ENCODE measurements at regions of chr1 and their contacts with region 1.

Region 1: DNA sequence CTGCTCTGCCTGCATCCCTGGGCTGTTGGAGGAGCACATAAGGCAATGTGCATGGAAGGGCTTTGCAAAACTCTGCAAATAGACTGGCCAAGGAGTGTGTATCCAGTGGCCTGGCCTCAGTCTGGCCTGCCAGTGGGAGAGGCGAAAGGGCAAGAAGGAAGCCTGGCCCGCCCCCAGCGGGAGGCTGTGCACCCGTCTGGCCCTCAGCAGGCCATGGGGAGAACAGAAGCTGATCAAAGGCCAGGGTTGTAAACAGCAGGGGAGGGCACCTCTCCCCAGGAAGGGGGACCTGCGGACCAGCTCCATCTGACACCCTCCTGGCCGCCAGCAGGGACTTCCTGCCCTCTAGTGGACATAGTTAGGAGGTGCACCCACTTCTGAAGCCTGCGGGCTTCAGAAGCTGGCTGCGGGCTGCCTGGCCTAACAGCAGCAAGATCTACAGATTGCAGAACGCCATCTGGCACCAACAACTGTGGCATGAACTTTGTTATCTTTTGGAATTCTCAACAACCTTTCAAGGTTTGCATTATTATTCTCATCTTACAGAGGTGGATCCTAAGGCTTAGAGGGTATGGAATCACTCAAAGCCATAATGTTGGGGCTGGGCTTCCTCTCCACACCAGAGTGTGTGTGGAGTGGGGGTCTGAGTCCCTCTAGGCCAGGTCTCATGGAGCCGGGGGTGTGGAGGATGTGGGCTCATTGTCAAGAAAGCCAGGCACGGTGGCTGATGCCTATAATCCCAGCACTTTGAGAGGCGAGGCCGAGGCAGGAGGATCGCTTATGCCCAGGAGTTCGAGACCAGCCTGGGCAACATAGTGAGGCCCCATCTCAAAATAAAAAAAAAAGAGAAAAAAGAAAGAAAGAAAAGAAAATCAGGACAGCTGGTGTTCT is 18.9 kb upstream of the CDK18 start:
- DNase-seq: peak; percentile 92
- H3K4me3 ChIP-seq: peak overlapping the region in 1 of 2 experiments; percentile 22; a peak in 1 of 4 replicates
- H3K27ac ChIP-seq: no peak overlapping the region
- H3K4me1 ChIP-seq: peaks cover 0 to 3% of the 10 kb centered on the region in 2 experiments; a peak in 2 of 4 replicates
- H3K27me3 ChIP-seq: peaks cover 16% of the 10 kb centered on the region; the same call in 1 of the 2 replicates
- CTCF ChIP-seq: peak; percentile 93
- EP300 ChIP-seq: no peak; a peak in 1 of 4 replicates
- RAD21 ChIP-seq: peak; percentile 91

Region 2: DNA sequence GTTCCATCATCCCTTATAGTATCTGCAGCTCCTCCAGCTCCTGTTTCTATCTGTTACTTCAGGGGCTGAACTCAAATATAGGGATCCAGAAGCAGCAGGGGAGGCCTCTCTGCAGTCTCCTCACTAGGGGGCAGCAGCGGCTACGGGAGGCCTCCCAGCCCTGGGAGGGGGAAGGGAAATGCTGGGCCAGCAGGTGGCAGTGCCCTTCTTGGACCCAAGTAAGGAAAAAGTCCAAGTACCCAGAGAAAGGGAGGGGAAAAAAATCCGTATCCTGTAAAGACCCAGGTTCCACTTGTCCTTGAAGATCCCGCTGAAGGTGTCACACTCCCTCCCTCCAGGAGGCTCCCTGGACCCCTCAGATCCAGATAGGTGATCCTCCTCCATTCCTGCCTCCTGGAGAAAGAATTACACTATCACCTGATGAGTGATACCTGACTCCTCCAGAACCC is 149.9 kb before region 1 on chr1:
- CTCF ChIA-PET with region 1: interaction called, 84 read pairs
- POLR2A ChIA-PET with region 1: no interaction called
- DNase-seq: peak; percentile 90
- H3K4me3 ChIP-seq: peak overlapping the region in 1 of 2 experiments; percentile 42; a peak in 1 of 4 replicates
- H3K27ac ChIP-seq: no peak overlapping the region
- H3K4me1 ChIP-seq: no peaks in the 10 kb centered on the region
- H3K27me3 ChIP-seq: no peaks in the 10 kb centered on the region; the same call in 1 of the 2 replicates
- CTCF ChIP-seq: peak; percentile 98
- EP300 ChIP-seq: no peak
- RAD21 ChIP-seq: peak; percentile 79

Region 3: GRCh38 chr1:205375835-205376545 is 109.6 kb before region 1 on chr1:
- CTCF ChIA-PET with region 1: interaction called, 18 read pairs
- POLR2A ChIA-PET with region 1: no interaction called
- DNase-seq: no peak
- H3K4me3 ChIP-seq: no peak overlapping the region
- H3K27ac ChIP-seq: no peak overlapping the region
- H3K4me1 ChIP-seq: peaks cover 4 to 34% of the 10 kb centered on the region in 2 experiments
- H3K27me3 ChIP-seq: no peaks in the 10 kb centered on the region
- CTCF ChIP-seq: peak; percentile 21
- EP300 ChIP-seq: no peak
- RAD21 ChIP-seq: no peak

Region 4: DNA sequence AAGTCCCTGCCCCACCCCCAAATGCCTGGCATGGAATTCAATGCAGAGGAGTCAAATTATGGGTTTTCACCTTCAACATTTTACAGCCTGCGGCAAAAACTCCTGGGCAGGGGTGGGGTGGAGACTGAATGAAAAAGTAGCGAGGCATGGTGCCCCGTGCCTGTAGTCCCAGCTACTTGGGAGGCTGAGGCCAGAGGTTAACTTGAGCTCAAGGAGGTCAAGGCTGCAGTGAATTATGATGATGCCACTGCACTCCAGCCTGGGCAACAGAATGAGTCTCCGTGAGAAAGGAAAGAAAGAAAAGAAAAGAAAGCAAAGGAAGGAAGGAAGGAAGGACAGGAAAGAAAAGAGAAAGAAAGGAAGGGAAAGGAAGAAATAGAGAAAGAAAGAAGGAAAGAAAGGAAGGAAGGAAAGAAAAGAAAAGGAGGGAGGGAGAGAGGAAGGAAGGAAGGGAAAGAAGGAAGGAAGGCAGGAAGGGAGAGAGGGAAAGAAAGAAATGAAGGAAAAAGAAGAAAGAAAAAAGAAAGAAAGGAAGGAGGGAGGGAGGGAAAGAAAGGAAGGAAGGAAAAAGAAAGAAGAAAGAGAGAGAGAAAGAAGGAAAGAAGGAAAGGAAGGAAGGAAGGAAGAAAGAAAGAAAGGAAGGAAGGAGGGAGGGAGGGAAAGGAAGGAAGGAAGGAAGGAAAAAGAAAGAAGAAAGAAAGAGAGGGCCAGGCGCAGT is 74.8 kb before region 1 on chr1:
- CTCF ChIA-PET with region 1: interaction called, 22 read pairs
- POLR2A ChIA-PET with region 1: no interaction called
- DNase-seq: no peak
- H3K4me3 ChIP-seq: no peak overlapping the region
- H3K27ac ChIP-seq: no peak overlapping the region
- H3K4me1 ChIP-seq: no peaks in the 10 kb centered on the region
- H3K27me3 ChIP-seq: peaks cover 7% of the 10 kb centered on the region; the same call in 1 of the 2 replicates
- CTCF ChIP-seq: no peak
- EP300 ChIP-seq: no peak
- RAD21 ChIP-seq: no peak

Region 5: DNA sequence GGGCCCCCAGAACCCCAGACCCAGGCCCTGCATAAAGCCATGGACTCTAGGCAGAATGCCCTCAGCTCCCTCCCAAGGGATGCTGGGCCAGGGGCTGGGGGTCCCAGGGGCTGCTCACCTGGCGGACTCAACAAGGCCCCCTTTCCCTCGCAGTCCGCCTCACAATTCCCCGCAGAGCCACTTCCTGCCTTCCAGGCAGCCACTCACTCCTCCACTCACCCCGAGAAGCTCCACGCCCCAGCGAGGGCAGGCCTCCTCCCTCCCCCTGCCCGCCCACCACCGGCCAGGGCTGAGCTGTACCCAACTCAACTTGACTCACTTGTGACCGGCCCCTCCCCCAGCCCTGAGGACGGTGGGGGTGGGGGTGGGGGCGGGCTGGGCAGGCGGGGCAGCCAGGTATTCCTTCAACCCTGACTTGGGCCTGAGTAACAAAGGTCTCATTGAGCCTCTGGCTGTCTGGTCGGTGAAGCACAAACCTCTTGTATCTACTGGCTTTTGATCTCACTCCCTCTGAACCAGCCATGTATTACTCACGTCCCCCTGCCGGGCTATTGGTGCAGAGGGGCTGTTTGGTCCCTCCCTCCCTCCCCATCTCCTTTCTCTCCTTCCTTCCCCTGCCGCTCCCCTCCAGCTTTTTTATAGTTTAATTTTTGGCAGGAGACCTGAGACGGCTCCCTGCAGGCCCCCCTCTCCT is 35.7 kb before region 1 on chr1:
- CTCF ChIA-PET with region 1: interaction called, 18 read pairs
- POLR2A ChIA-PET with region 1: no interaction called
- DNase-seq: peak; percentile 52
- H3K4me3 ChIP-seq: no peak overlapping the region
- H3K27ac ChIP-seq: no peak overlapping the region
- H3K4me1 ChIP-seq: peaks cover 0 to 6% of the 10 kb centered on the region in 2 experiments; a peak in 1 of 4 replicates
- H3K27me3 ChIP-seq: peaks cover 41% of the 10 kb centered on the region
- CTCF ChIP-seq: no peak
- EP300 ChIP-seq: no peak
- RAD21 ChIP-seq: no peak

Region 6: DNA sequence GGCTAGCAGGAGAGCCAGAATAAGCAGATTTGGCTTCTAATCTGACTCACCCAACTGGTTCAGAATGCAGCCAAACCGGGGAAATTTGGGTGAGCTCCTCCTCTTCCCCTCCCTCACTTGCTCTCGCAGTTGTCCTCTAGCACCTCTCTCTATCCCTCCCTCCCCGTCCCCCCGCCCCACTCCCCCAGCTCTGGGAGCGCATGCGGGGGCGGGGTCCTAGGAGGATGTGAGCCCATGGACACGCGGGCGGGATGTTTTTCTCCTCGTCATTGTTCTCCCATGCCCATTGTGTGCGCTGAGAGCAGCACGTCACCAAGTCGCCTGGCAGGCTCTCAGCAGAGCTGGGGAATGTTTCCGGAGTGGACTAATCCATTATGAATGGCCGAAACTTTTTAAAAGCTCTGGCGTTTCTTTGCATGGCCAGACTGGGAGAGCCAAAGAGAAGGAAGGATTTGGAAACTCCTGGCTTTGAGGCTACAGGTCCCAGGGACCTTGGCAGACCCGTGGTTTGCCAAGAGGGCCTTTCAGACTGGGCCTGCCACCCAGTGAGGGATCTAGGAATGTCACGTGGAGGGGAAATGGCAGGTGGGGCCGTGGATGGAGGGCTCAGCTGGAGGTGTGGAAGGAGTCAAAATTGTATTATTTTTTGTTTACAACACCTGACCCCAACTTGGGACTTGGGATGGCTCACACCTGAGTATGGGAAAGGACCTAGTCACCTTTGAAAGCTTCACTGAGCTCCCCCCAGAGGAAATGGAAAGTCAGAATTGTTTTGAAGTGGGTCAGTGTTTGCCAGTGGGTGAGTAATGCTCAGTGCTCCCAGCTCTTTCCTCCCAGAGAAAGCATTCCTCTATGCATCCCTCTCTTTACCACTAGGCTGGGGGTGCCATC is 58.1 kb after region 1 on chr1:
- CTCF ChIA-PET with region 1: interaction called, 1,333 read pairs
- POLR2A ChIA-PET with region 1: no interaction called
- DNase-seq: peak; percentile 78
- H3K4me3 ChIP-seq: peak overlapping the region in 1 of 2 experiments; percentile 37; a peak in 2 of 4 replicates
- H3K27ac ChIP-seq: peak overlapping the region; percentile 23 to 88; a peak in 3 of 4 replicates
- H3K4me1 ChIP-seq: peaks cover 0 to 8% of the 10 kb centered on the region in 2 experiments; a peak in 1 of 4 replicates
- H3K27me3 ChIP-seq: no peaks in the 10 kb centered on the region
- CTCF ChIP-seq: no peak
- EP300 ChIP-seq: no peak
- RAD21 ChIP-seq: no peak

Region 7: DNA sequence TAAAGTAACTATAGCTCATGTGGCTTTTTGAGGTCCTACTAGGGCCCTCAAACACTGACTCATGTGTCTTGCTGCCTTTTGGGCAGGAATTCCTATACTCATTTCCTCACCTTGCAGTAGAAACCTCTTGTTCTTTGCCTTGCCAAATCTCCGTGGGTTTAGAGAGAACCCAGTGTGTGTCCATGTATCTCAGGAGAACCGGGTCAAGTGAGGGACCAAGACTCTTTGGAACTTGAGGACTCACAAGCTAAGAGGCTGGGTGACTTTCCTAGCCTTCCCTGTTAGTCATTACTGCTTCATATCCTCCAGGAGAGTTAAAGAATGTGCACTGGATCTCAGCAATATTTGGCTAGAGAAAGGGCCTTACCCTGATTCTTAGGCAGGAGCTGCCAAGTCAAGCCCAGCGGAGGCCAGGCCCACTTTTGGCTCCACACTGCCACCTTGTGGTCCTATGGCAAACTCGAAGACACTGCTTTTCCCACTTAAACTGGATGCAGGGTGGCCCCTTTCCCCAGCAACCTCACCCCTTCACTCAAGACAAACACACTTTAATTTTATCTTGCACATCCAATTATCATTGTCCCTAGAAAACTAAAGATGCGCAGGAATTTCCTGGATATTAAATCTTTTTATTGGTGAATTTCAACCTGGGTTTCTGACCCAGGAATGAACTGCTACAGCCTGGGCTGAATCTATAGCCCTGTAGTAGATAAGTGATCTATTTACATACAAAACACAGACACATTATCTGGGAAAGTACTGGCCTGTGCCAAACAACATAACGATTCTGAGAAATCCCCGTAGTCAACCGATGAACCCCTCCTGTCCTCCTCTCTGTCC is 621.0 kb after region 1 on chr1:
- CTCF ChIA-PET with region 1: no interaction called
- POLR2A ChIA-PET with region 1: no interaction called
- DNase-seq: peak; percentile 84
- H3K4me3 ChIP-seq: no peak overlapping the region; a peak in 1 of 4 replicates
- H3K27ac ChIP-seq: no peak overlapping the region
- H3K4me1 ChIP-seq: no peaks in the 10 kb centered on the region
- H3K27me3 ChIP-seq: peaks cover 11% of the 10 kb centered on the region; the same call in 1 of the 2 replicates
- CTCF ChIP-seq: peak; percentile 90
- EP300 ChIP-seq: no peak
- RAD21 ChIP-seq: peak; percentile 92

Measured in SK-N-SH (cell line).